ENCODE measurements at regions of chr10 and their contacts with region 1.

Region 1: DNA sequence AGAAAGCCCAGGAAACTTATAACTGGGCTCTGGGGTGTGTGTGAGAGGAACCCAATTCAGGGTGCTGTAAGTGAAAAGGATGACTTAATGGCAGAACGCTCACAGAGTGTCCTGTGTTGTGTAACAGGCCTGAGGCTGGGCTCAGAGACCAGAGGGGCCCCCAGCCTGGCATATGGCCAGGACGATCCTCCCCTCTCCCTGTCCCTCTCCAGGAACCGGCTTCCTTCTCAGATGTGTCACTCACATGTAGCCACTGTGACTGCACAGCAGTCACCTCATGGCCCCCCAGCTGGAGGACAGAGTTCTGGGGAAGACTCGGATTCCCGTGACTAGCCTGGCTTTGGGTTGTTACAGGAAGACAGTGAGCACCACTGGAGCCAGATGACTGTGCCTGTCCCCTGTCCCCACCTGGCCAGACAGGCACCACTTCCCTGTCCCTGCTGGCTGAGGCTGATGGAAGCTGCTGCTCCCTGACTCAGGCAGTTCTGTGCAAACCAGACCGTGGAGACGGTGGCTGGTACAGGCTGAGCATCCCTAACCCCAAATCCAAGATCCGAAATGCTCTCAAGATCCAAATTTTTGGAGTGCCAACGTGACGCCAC is 220.5 kb downstream of the MLLT10 start:
- DNase-seq: no peak
- H3K4me3 ChIP-seq: no peak overlapping the region
- H3K27ac ChIP-seq: no peak overlapping the region
- H3K4me1 ChIP-seq: no peaks in the 10 kb centered on the region
- H3K27me3 ChIP-seq: no peaks in the 10 kb centered on the region
- CTCF ChIP-seq: no peak
- POLR2A ChIP-seq: no peak

Region 2: DNA sequence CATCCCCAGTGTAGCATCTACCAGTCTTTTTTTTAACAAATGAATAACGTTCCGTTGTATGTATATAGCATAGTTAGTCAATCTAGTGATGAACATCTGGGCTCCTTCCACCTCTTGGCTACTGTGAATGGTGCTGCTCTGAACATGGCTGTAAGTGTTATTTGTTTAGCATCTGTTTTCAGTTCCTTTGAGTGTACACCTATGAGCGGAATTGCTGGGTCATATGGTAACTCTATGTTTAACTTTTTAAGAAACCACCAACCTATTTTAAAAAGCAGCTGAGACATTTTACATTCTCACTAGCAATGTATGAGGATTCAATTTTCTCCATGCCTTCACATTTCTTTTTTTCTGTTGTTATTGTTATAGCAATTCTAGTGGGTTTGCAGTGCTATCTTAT is 70.8 kb after region 1 on chr10:
- intact Hi-C with region 1: no loop called
- DNase-seq: no peak
- H3K4me3 ChIP-seq: no peak overlapping the region
- H3K27ac ChIP-seq: no peak overlapping the region
- H3K4me1 ChIP-seq: no peaks in the 10 kb centered on the region
- H3K27me3 ChIP-seq: no peaks in the 10 kb centered on the region
- CTCF ChIP-seq: no peak
- POLR2A ChIP-seq: no peak

Region 3: GRCh38 chr10:22580711-22581110 is 826.2 kb after region 1 on chr10:
- intact Hi-C with region 1: loop called (anchors 10 kb)
- DNase-seq: no peak
- H3K4me3 ChIP-seq: no peak overlapping the region
- H3K27ac ChIP-seq: no peak overlapping the region
- H3K4me1 ChIP-seq: no peaks in the 10 kb centered on the region
- H3K27me3 ChIP-seq: no peaks in the 10 kb centered on the region
- CTCF ChIP-seq: no peak
- POLR2A ChIP-seq: no peak